Activated naive CD4-positive, alpha-beta T cell treated with anti-CD3 and anti-CD28 coated beads for 36 hours (primary cell): ENCODE measurements at regions of chr1 and their contacts with region 1.

Region 1: DNA sequence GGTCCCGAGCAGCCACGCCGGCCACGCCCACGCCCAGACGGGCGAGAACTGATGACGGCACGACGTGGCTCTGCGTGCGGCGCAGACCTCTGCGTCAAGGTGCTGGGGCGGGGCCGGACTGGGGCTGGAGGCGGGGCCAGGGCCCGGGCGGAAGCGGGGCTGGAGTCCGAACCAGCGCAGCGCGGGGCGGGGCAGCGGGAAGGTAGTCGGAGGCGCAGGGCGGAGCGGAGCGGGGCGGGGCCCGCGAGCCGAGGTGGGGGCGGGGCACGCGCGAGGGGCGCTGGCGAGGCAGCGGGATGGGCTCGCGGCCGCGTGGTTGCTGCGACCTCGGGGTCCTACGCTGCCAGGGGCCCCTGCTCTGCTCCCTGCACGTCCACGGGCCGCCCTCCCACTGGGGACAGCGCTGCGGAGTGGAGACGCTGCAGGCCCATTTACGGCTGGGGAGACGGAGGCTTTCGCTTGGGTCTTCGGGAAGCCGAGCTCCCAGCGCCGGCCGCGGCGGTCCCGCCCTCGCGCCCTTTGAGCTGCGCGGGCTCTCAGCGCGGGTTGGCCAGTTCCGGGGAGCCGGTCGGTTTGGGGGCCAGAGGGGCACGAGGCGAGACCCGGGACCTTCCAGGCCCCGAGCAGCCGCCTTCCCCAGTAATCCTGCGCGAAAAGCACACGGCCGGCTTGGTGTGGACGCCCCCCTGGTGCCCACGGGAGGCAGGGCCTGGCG is at the start of gene PEX10:
- DNase-seq: peak; percentile 99
- H3K4me3 Mint-ChIP-seq: peak within 1 kb of the TSS; percentile 84
- H3K27ac Mint-ChIP-seq: peak within 1 kb of the TSS; percentile 77
- H3K4me1 Mint-ChIP-seq: peaks cover 37% of the 10 kb centered on the region
- H3K27me3 Mint-ChIP-seq: no peaks in the 10 kb centered on the region
- total RNA-seq, gene PEX10: 8.6 to 9.1 TPM

Region 2: GRCh38 chr1:2391041-2391930 is 21.4 kb before region 1 on chr1 and contains the starts of genes MORN1 and RER1:
- CTCF ChIA-PET with region 1: interaction called, 4 read pairs
- intact Hi-C with region 1: loop called (anchors 1 kb)
- DNase-seq: peak; percentile 99
- H3K4me3 Mint-ChIP-seq: peak within 1 kb of the TSS; percentile 88
- H3K27ac Mint-ChIP-seq: peak within 1 kb of the TSS; percentile 79
- H3K4me1 Mint-ChIP-seq: peaks cover 40% of the 10 kb centered on the region
- H3K27me3 Mint-ChIP-seq: no peaks in the 10 kb centered on the region
- total RNA-seq, gene MORN1: 3.2 to 4.9 TPM
- total RNA-seq, gene RER1: 115 to 124 TPM

Region 3: DNA sequence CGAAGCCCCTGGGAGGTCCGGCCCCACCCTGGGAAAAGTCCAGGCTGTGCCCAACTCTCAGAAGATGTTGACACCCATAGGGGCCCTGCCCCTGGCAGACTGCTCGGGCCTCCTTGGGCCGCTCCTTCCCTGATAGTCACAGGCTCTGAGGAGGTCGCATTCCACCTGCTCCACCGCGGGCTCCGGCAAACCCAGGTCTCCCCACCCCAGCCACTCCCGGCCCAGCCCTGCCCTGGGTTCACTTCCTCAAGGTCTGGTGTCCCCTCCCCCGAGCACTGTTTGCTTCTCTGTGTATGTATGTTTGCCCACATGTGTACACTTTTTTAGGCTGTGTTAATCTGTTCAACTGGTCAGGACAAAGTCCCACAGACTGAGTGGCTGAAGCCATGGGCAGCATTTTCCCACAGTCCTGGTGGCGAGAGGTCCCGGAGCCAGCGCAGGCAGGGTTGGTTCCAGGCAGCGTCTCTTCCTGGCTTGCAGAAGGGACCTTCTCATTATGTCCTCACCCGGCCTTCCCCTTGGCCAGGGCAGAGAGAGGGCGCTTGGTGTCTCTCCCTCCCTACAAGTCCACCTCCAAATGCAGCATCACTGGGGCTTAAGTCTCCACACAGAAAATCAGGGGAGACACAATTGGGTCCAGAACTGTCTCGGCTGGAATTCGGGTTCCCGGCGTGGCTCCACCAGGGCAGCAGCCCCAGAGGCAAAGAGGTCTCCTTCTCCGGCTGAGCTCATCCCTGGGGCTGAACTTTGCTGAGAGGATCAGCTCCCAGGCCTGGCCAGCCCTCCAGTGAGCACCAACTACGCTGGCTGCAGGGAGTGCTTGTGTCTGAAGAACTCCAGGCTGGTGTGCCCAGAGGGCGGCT is 163.4 kb after region 1 on chr1:
- CTCF ChIA-PET with region 1: no interaction called
- intact Hi-C with region 1: loop called (anchors 2 kb)
- DNase-seq: no peak
- H3K4me3 Mint-ChIP-seq: no peak overlapping the region
- H3K27ac Mint-ChIP-seq: peak overlapping the region; percentile 97
- H3K4me1 Mint-ChIP-seq: peaks cover 40% of the 10 kb centered on the region
- H3K27me3 Mint-ChIP-seq: no peaks in the 10 kb centered on the region

Region 4: GRCh38 chr1:2642560-2643413 is 230.1 kb after region 1 on chr1:
- CTCF ChIA-PET with region 1: no interaction called
- intact Hi-C with region 1: loop called (anchors 5 kb)
- DNase-seq: peak; percentile 97
- H3K4me3 Mint-ChIP-seq: peak overlapping the region; percentile 90
- H3K27ac Mint-ChIP-seq: peak overlapping the region; percentile 88
- H3K4me1 Mint-ChIP-seq: peaks cover 6% of the 10 kb centered on the region
- H3K27me3 Mint-ChIP-seq: no peaks in the 10 kb centered on the region

Region 5: GRCh38 chr1:2840036-2840809 is 427.5 kb after region 1 on chr1:
- CTCF ChIA-PET with region 1: no interaction called
- intact Hi-C with region 1: loop called (anchors 2 kb)
- DNase-seq: peak; percentile 80
- H3K4me3 Mint-ChIP-seq: peak overlapping the region; percentile 72
- H3K27ac Mint-ChIP-seq: peak overlapping the region; percentile 73
- H3K4me1 Mint-ChIP-seq: peaks cover 16% of the 10 kb centered on the region
- H3K27me3 Mint-ChIP-seq: no peaks in the 10 kb centered on the region